ENCODE measurements at regions of chr10 and their contacts with region 1.

Region 1: GRCh38 chr10:102583435-102584417 is 60.6 kb upstream of the TRIM8 start:
- DNase-seq: peak; percentile 87
- ATAC-seq: peak; percentile 100
- H3K4me3 ChIP-seq: no peak overlapping the region
- H3K27ac ChIP-seq: no peak overlapping the region
- H3K4me1 ChIP-seq: peaks cover 0 to 3% of the 10 kb centered on the region in 2 experiments; a peak in 1 of 4 replicates
- H3K27me3 ChIP-seq: no peaks in the 10 kb centered on the region
- CTCF ChIP-seq: peak; percentile 85 to 98 (median 96)
- POLR2A ChIP-seq: no peak
- RAD21 ChIP-seq: peak; percentile 97

Region 2: DNA sequence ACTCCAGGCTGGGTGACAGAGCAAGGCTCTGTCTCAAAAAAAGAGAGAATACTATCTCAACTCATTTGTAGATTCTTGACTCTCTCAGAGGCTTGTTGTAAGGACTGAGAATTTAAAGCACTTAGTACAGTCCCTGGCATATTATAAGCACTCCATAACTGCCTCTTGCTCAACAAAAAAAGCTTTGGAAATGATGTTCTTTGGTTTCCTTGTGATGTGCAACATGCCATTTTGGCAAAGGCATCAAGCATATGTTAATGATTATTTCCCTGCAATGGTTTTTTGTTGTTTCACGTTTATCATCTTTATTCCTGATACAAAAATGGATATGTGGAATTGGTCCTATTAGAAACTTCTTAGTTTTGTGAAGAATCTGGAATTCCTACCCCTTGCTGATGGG is 415.9 kb before region 1 on chr10:
- CTCF ChIA-PET with region 1: interaction called, 20 read pairs
- POLR2A ChIA-PET with region 1: no interaction called
- RAD21 ChIA-PET with region 1: interaction called in 1 of 2 experiments, 4 read pairs
- intact Hi-C with region 1: loop called (anchors 2 kb)
- DNase-seq: no peak
- ATAC-seq: no peak
- H3K4me3 ChIP-seq: no peak overlapping the region
- H3K27ac ChIP-seq: no peak overlapping the region
- H3K4me1 ChIP-seq: peaks cover 4 to 6% of the 10 kb centered on the region in 2 experiments; a peak in 2 of 4 replicates
- H3K27me3 ChIP-seq: no peaks in the 10 kb centered on the region
- CTCF ChIP-seq: no peak
- POLR2A ChIP-seq: no peak
- RAD21 ChIP-seq: no peak

Region 3: GRCh38 chr10:102394079-102394800 is 189.5 kb before region 1 on chr10:
- CTCF ChIA-PET with region 1: interaction called, 33 read pairs
- POLR2A ChIA-PET with region 1: no interaction called
- RAD21 ChIA-PET with region 1: no interaction called
- intact Hi-C with region 1: loop called (anchors 2 kb)
- DNase-seq: peak; percentile 95
- ATAC-seq: peak; percentile 88
- H3K4me3 ChIP-seq: peak overlapping the region; percentile 75 to 92
- H3K27ac ChIP-seq: peak overlapping the region; percentile 77
- H3K4me1 ChIP-seq: peaks cover 16 to 58% of the 10 kb centered on the region in 2 experiments
- H3K27me3 ChIP-seq: no peaks in the 10 kb centered on the region
- CTCF ChIP-seq: no peak; a peak in 1 of 6 replicates
- POLR2A ChIP-seq: no peak
- RAD21 ChIP-seq: no peak

Region 4: DNA sequence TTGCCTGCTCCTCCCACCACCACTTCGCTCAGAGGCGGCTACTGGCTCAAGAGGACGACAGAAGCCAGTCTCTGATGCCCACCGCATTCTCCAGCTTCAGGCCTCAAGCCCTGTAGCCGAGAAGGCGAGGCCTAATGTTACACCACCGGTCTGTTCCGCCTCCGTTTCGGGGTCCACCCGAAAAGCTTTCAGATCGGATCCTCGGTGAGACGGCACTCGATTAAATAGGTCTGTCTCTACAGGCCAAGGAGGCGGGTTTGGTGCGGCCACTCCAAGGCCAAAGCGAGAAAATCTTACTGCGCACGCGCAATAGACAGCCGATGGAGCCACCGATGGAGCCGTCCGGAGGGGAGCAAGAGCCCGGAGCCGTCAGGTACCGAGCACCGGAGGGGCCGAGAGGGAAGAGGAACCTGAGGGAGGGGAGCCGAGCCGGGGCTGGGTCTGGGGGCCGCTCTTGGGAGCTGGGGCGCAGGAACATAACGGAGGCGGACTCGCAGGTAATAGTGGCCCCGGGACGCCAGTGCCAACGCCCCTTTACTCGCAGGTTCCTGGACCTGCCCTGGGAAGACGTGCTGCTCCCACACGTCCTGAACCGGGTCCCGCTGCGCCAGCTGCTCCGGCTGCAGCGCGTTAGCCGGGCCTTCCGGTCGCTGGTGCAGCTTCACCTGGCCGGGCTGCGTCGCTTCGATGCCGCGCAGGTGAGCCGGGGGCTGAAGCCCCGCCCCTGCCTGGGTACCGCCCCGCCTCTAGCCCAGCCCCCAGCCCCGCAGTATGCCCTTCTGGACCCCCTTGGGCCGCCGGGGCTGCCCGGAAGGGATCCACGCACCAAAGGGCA is 162.7 kb before region 1 on chr10 and contains the start of gene FBXL15:
- CTCF ChIA-PET with region 1: interaction called, 37 read pairs
- POLR2A ChIA-PET with region 1: no interaction called
- RAD21 ChIA-PET with region 1: interaction called in 1 of 2 experiments, 4 read pairs
- intact Hi-C with region 1: no loop called
- DNase-seq: peak; percentile 99
- ATAC-seq: peak; percentile 71
- H3K4me3 ChIP-seq: peak within 1 kb of the TSS; percentile 87 to 94
- H3K27ac ChIP-seq: peak within 1 kb of the TSS; percentile 77
- H3K4me1 ChIP-seq: peaks cover 15 to 33% of the 10 kb centered on the region in 2 experiments; a peak in 3 of 4 replicates
- H3K27me3 ChIP-seq: no peaks in the 10 kb centered on the region
- CTCF ChIP-seq: no peak
- POLR2A ChIP-seq: peak; percentile 20
- RAD21 ChIP-seq: no peak
- total RNA-seq, gene FBXL15: 21.1 TPM

Region 5: GRCh38 chr10:102503281-102504220 is 80.2 kb before region 1 on chr10 and contains the start of gene SUFU:
- CTCF ChIA-PET with region 1: interaction called, 103 read pairs
- POLR2A ChIA-PET with region 1: interaction called, 5 read pairs
- RAD21 ChIA-PET with region 1: interaction called, 8 to 10 read pairs
- intact Hi-C with region 1: loop called (anchors 1 kb)
- DNase-seq: peak; percentile 100
- ATAC-seq: peak; percentile 72
- H3K4me3 ChIP-seq: peak within 1 kb of the TSS; percentile 83 to 89
- H3K27ac ChIP-seq: peak within 1 kb of the TSS; percentile 59
- H3K4me1 ChIP-seq: peaks cover 13 to 27% of the 10 kb centered on the region in 2 experiments
- H3K27me3 ChIP-seq: no peaks in the 10 kb centered on the region
- CTCF ChIP-seq: peak in 2 of 3 experiments; percentile 94 to 99; a peak in 4 of 6 replicates
- POLR2A ChIP-seq: peak; percentile 53
- RAD21 ChIP-seq: no peak
- total RNA-seq, gene SUFU: 18.8 TPM

Region 6: GRCh38 chr10:102596506-102596971 is 12.8 kb after region 1 on chr10:
- CTCF ChIA-PET with region 1: interaction called, 20 read pairs
- POLR2A ChIA-PET with region 1: no interaction called
- RAD21 ChIA-PET with region 1: no interaction called
- intact Hi-C with region 1: no loop called
- DNase-seq: peak; percentile 57
- ATAC-seq: peak; percentile 94
- H3K4me3 ChIP-seq: no peak overlapping the region
- H3K27ac ChIP-seq: peak overlapping the region; percentile 4; the same call in 1 of the 2 replicates
- H3K4me1 ChIP-seq: peaks cover 7 to 25% of the 10 kb centered on the region in 2 experiments; a peak in 3 of 4 replicates
- H3K27me3 ChIP-seq: no peaks in the 10 kb centered on the region
- CTCF ChIP-seq: peak in 2 of 3 experiments; percentile 98 to 100; a peak in 4 of 6 replicates
- POLR2A ChIP-seq: no peak
- RAD21 ChIP-seq: no peak

Measured in HCT116 (cell line).